Heart right ventricle (tissue), 16 donors: ENCODE measurements at regions of chr14 and their contacts with region 1.

Region 1: DNA sequence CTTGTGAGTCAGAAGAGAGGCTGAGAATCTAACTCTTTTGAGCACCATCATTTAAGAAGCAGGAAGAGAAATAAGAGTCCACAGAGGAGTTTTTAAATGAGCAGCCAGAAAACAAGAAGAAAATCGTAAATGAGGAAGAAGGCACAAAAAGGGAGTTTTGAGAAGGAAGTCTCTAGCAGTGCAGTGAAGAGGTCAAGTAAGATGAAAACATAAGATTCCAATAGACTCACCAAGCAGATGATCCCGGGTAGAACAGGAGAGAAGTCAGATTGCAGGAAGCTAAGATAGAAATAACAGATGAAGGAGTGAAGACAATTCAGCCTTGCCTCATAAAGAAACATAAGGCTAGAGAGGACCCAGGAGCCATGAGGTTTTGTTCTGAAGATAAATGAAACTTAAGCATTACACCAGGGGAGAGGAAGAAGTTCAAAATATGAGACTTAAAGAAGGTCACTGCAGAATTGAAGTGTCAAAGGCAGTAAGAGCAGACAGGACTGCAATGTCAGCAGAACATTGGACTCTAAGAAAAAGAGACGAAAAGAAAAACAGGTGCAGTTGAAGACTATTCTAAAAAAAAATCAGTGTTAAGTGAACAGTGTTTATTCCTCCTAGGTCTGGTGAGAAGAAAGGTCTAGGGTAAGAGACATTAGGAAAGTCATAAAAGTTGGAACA is 229.0 kb downstream of the SEC23A start:
- DNase-seq: no peak
- ATAC-seq: no peak
- H3K4me3 ChIP-seq: no peak overlapping the region
- H3K27ac ChIP-seq: peak overlapping the region in 3 of 10 donors; percentile 5 to 48 (median 16)
- H3K4me1 ChIP-seq: peaks cover 0 to 23% (median 18%) of the 10 kb centered on the region in 9 donors
- H3K27me3 ChIP-seq: no peaks in the 10 kb centered on the region
- CTCF ChIP-seq: no peak

Region 2: DNA sequence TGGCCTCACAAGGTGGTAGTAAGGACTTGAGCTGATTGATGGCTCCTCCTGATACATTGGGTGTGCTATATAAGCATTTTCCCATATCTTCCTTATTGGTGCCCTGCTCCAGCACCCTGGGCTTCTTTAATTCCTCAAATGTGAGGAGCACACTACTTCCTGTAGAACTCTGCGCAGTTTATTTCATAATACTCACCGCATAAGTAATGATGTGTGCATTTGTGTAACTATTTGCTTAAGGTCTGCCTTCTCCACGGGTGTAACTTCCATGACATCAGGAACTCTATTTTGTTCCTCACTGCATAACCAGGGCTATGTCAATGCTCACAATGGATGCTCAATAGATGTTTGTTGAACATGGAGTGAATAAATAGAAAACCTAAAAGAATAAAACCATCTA is 163.2 kb before region 1 on chr14:
- intact Hi-C with region 1: no loop called
- DNase-seq: no peak
- ATAC-seq: no peak
- H3K4me3 ChIP-seq: no peak overlapping the region
- H3K27ac ChIP-seq: no peak overlapping the region
- H3K4me1 ChIP-seq: no peaks in the 10 kb centered on the region
- H3K27me3 ChIP-seq: no peaks in the 10 kb centered on the region
- CTCF ChIP-seq: no peak

Region 3: DNA sequence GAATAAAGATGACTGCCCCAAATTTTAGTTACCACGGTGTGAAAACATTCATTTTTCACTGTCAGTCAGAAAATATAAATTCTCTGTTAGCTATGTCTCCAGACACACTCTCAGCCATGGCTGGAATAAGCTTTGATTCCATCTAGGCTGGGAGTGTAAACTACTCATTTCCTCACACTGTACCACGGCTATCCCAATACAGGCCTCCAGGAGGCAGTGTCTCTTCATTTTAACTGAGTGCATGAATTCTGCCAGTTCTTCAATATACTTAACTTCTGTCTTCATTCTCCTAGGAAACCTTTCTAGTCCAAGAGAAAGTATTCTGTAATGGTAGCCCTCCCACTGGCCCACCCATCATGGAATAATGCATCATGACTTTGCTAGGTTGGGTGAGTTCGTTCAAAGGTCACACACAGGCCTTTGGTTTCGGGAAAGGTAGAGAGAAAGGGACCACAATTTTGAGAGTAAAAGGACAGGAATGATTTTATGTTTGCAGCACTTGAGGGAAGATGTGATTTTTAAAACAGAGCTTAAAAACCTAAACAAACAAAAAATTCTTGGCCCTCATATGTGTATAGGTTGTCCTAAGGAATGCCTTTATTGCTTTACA is 152.2 kb before region 1 on chr14:
- intact Hi-C with region 1: loop called in 7 of 10 experiments (anchors 5 to 10 kb)
- DNase-seq: peak; percentile 14 to 54
- ATAC-seq: peak in 7 of 8 donors; percentile 61 to 81 (median 75)
- H3K4me3 ChIP-seq: no peak overlapping the region
- H3K27ac ChIP-seq: no peak overlapping the region
- H3K4me1 ChIP-seq: peaks cover 0 to 11% (median 0%) of the 10 kb centered on the region in 9 donors
- H3K27me3 ChIP-seq: no peaks in the 10 kb centered on the region
- CTCF ChIP-seq: peak; percentile 53 to 85 (median 76)

Region 4: GRCh38 chr14:38900887-38901286 is 26.8 kb after region 1 on chr14:
- intact Hi-C with region 1: no loop called
- DNase-seq: no peak
- ATAC-seq: no peak
- H3K4me3 ChIP-seq: no peak overlapping the region
- H3K27ac ChIP-seq: no peak overlapping the region
- H3K4me1 ChIP-seq: no peaks in the 10 kb centered on the region
- H3K27me3 ChIP-seq: no peaks in the 10 kb centered on the region
- CTCF ChIP-seq: no peak

Region 5: GRCh38 chr14:38989922-38990546 is 116.0 kb after region 1 on chr14:
- intact Hi-C with region 1: loop called in 3 of 10 experiments (anchors 5 to 10 kb)
- DNase-seq: no peak
- ATAC-seq: peak in 1 of 8 donors; percentile 41
- H3K4me3 ChIP-seq: peak overlapping the region in 2 of 10 donors; percentile 4 to 18
- H3K27ac ChIP-seq: peak overlapping the region in 7 of 10 donors; percentile 7 to 79 (median 51)
- H3K4me1 ChIP-seq: peaks cover 0 to 55% (median 15%) of the 10 kb centered on the region in 9 donors
- H3K27me3 ChIP-seq: no peaks in the 10 kb centered on the region
- CTCF ChIP-seq: no peak

Region 6: GRCh38 chr14:39005044-39005880 is 131.2 kb after region 1 on chr14:
- intact Hi-C with region 1: loop called in 6 of 10 experiments (anchors 5 to 10 kb)
- DNase-seq: no peak
- ATAC-seq: peak; percentile 73 to 94 (median 82)
- H3K4me3 ChIP-seq: no peak overlapping the region
- H3K27ac ChIP-seq: no peak overlapping the region
- H3K4me1 ChIP-seq: peaks cover 0 to 12% (median 0%) of the 10 kb centered on the region in 9 donors
- H3K27me3 ChIP-seq: no peaks in the 10 kb centered on the region
- CTCF ChIP-seq: no peak

Region 7: GRCh38 chr14:39015360-39015961 is 141.4 kb after region 1 on chr14:
- intact Hi-C with region 1: loop called in 5 of 10 experiments (anchors 2 to 10 kb)
- DNase-seq: peak in 1 of 2 donors; percentile 25
- ATAC-seq: peak in 1 of 8 donors; percentile 38
- H3K4me3 ChIP-seq: no peak overlapping the region
- H3K27ac ChIP-seq: no peak overlapping the region
- H3K4me1 ChIP-seq: peaks cover 0 to 5% (median 0%) of the 10 kb centered on the region in 9 donors
- H3K27me3 ChIP-seq: no peaks in the 10 kb centered on the region
- CTCF ChIP-seq: peak; percentile 61 to 93 (median 88)